ENCODE measurements at regions of chr7 and their contacts with region 1.

Region 1: GRCh38 chr7:43639858-43640491 is 57.1 kb downstream of the STK17A start:
- DNase-seq: no peak
- H3K4me3 ChIP-seq: peak overlapping the region in 1 of 4 donors; percentile 5
- H3K27ac ChIP-seq: peak overlapping the region; percentile 70 to 79 (median 76)
- H3K4me1 ChIP-seq: peaks cover 32 to 56% (median 49%) of the 10 kb centered on the region in 4 donors
- H3K27me3 ChIP-seq: no peaks in the 10 kb centered on the region
- CTCF ChIP-seq: no peak
- EP300 ChIP-seq: no peak
- POLR2A ChIP-seq: no peak

Region 2: GRCh38 chr7:43700059-43700501 is 60.1 kb after region 1 on chr7:
- intact Hi-C with region 1: loop called (anchors 5 kb)
- DNase-seq: no peak
- H3K4me3 ChIP-seq: no peak overlapping the region
- H3K27ac ChIP-seq: no peak overlapping the region
- H3K4me1 ChIP-seq: peaks cover 0 to 34% (median 23%) of the 10 kb centered on the region in 4 donors
- H3K27me3 ChIP-seq: no peaks in the 10 kb centered on the region
- CTCF ChIP-seq: peak; percentile 67 to 71 (median 68)
- EP300 ChIP-seq: no peak
- POLR2A ChIP-seq: no peak

Region 3: GRCh38 chr7:43729214-43729923 is 89.4 kb after region 1 on chr7 and contains the start of gene COA1:
- intact Hi-C with region 1: no loop called
- DNase-seq: peak; percentile 94
- H3K4me3 ChIP-seq: peak within 1 kb of the TSS; percentile 72 to 91 (median 76)
- H3K27ac ChIP-seq: peak within 1 kb of the TSS; percentile 79 to 87 (median 86)
- H3K4me1 ChIP-seq: peaks cover 9 to 49% (median 40%) of the 10 kb centered on the region in 4 donors
- H3K27me3 ChIP-seq: no peaks in the 10 kb centered on the region
- CTCF ChIP-seq: peak in 2 of 3 experiments; percentile 15 to 35
- EP300 ChIP-seq: no peak
- POLR2A ChIP-seq: no peak
- total RNA-seq, gene COA1: 26.1 to 49.0 (median 30.9) TPM